Naive thymus-derived CD4-positive, alpha-beta T cell (primary cell): ENCODE measurements at regions of chr17 and their contacts with region 1.

Region 1: GRCh38 chr17:65523853-65524664 is 37.4 kb downstream of the AXIN2 start:
- DNase-seq: peak in 1 of 9 donors; percentile 28
- ATAC-seq: peak; percentile 7
- H3K4me3 ChIP-seq: no peak overlapping the region
- H3K4me3 Mint-ChIP-seq: peak overlapping the region; percentile 46 to 80 (median 63)
- H3K27ac ChIP-seq: peak overlapping the region; percentile 63
- H3K27ac Mint-ChIP-seq: peak overlapping the region; percentile 57 to 96 (median 91)
- H3K4me1 ChIP-seq: peaks cover 24 to 28% of the 10 kb centered on the region in 2 donors
- H3K4me1 Mint-ChIP-seq: peaks cover 15 to 56% (median 47%) of the 10 kb centered on the region in 7 donors
- H3K27me3 ChIP-seq: no peaks in the 10 kb centered on the region
- H3K27me3 Mint-ChIP-seq: peaks cover 0 to 64% (median 0%) of the 10 kb centered on the region in 5 donors

Region 2: GRCh38 chr17:65480273-65480672 is 43.8 kb before region 1 on chr17:
- CTCF ChIA-PET with region 1: no interaction called
- POLR2A ChIA-PET with region 1: no interaction called
- intact Hi-C with region 1: loop called in 1 of 2 experiments (anchors 5 kb)
- DNase-seq: no peak
- ATAC-seq: no peak
- H3K4me3 ChIP-seq: no peak overlapping the region
- H3K4me3 Mint-ChIP-seq: no peak overlapping the region
- H3K27ac ChIP-seq: no peak overlapping the region
- H3K27ac Mint-ChIP-seq: no peak overlapping the region
- H3K4me1 ChIP-seq: no peaks in the 10 kb centered on the region
- H3K4me1 Mint-ChIP-seq: peaks cover 0 to 13% (median 0%) of the 10 kb centered on the region in 7 donors
- H3K27me3 ChIP-seq: no peaks in the 10 kb centered on the region
- H3K27me3 Mint-ChIP-seq: peaks cover 0 to 2% (median 0%) of the 10 kb centered on the region in 5 donors

Region 3: DNA sequence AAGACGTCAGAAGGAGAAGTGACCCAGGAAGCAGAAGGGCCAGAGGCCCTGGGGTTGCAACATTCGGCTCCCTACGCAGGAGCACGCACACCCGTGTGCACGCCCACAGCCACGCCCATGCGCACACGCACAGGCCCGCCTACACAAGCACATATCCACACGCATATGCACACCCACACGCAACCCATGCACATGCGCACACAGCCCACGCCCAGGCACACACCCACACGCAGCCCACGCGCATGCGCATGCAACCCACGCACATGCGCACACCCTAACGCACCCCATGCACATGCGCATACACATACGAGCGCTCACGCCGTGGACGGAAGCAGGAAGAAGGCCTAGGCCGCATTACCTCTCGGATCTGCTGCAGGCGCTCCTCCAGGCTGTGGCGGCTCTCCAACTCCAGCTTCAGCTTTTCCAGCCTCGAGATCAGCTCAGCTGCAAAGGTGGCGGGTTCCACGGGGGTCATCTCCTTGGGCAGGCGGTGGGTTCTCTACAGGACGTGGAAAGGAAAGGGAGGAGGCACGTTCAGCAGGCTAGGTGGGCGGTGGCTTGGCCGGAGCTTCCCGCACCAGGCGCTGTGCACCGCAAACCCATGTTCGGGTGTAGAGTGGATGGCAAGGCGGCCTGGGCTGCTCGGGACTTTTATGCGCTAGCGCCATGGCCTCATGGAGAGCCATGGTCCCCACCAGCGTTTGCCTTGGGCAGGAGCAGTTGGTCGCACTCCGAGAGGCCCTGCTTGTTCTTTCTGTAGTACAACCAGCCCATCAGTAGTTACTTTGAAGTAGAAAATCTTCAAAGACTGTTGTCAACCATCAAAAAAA is 14.0 kb after region 1 on chr17:
- CTCF ChIA-PET with region 1: no interaction called
- POLR2A ChIA-PET with region 1: interaction called, 7 read pairs
- intact Hi-C with region 1: loop called in 1 of 2 experiments (anchors 2 kb)
- DNase-seq: peak in 8 of 9 donors; percentile 36 to 83 (median 74)
- ATAC-seq: peak; percentile 58
- H3K4me3 ChIP-seq: peak overlapping the region; percentile 35
- H3K4me3 Mint-ChIP-seq: peak overlapping the region; percentile 76 to 90 (median 84)
- H3K27ac ChIP-seq: peak overlapping the region; percentile 65
- H3K27ac Mint-ChIP-seq: peak overlapping the region; percentile 59 to 96 (median 89)
- H3K4me1 ChIP-seq: peaks cover 0 to 30% of the 10 kb centered on the region in 2 donors
- H3K4me1 Mint-ChIP-seq: peaks cover 8 to 72% (median 57%) of the 10 kb centered on the region in 7 donors
- H3K27me3 ChIP-seq: no peaks in the 10 kb centered on the region
- H3K27me3 Mint-ChIP-seq: peaks cover 0 to 22% (median 0%) of the 10 kb centered on the region in 5 donors

Region 4: DNA sequence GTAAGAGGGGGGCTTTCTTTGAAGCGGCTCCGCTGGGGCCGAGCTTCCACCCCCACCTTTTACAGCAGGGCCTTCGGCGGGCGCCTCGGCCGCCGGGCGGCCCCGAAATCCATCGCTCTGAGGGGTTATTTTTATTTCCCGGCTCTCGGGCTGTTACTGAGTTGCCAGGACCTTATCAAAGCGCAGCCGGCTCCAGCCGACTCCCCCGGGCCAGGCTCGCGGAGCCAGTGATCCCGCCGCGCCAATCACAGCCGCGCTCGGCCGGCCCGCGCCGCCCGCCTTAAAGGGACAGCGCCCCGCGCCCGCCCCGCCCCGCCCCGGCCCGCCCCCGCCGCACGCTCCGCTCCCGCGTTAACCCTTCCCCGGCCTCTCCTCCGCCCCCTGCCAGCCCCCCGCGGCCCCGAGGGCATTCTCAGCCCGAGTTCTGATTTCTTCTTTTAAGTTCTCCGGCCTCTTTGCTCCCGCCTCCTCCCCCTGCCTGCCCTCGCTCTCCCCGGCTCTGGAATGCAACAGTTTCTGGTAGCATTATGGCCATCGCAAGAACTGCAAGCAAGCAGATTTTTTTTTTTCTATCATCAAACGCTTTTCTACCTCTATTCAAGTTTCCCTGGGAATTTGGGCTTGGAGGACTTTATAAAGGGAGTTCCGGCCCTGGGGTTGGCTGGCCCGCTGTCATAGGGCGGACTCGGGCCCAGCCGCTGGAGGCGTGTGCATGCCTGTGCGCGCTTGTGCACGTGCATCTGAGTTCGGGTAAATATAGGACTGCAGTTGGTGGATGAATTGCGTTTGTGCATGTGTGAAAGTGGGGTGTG is 37.5 kb after region 1 on chr17 and contains the start of gene AXIN2:
- CTCF ChIA-PET with region 1: no interaction called
- POLR2A ChIA-PET with region 1: interaction called, 3 read pairs
- intact Hi-C with region 1: loop called (anchors 1 to 2 kb)
- DNase-seq: peak; percentile 70 to 91 (median 88)
- ATAC-seq: peak; percentile 91
- H3K4me3 ChIP-seq: peak within 1 kb of the TSS; percentile 70
- H3K4me3 Mint-ChIP-seq: peak within 1 kb of the TSS in 8 of 10 donors; percentile 79 to 94 (median 87)
- H3K27ac ChIP-seq: peak within 1 kb of the TSS; percentile 92
- H3K27ac Mint-ChIP-seq: peak within 1 kb of the TSS; percentile 70 to 93 (median 90)
- H3K4me1 ChIP-seq: peaks cover 18 to 24% of the 10 kb centered on the region in 2 donors
- H3K4me1 Mint-ChIP-seq: peaks cover 10 to 37% (median 31%) of the 10 kb centered on the region in 7 donors
- H3K27me3 ChIP-seq: no peaks in the 10 kb centered on the region
- H3K27me3 Mint-ChIP-seq: peaks cover 0 to 22% (median 0%) of the 10 kb centered on the region in 5 donors
- total RNA-seq, gene AXIN2: 7.4 to 63.4 (median 39.5) TPM